AG04449 (cell line): ENCODE measurements at regions of chr15 and their contacts with region 1.

Region 1: DNA sequence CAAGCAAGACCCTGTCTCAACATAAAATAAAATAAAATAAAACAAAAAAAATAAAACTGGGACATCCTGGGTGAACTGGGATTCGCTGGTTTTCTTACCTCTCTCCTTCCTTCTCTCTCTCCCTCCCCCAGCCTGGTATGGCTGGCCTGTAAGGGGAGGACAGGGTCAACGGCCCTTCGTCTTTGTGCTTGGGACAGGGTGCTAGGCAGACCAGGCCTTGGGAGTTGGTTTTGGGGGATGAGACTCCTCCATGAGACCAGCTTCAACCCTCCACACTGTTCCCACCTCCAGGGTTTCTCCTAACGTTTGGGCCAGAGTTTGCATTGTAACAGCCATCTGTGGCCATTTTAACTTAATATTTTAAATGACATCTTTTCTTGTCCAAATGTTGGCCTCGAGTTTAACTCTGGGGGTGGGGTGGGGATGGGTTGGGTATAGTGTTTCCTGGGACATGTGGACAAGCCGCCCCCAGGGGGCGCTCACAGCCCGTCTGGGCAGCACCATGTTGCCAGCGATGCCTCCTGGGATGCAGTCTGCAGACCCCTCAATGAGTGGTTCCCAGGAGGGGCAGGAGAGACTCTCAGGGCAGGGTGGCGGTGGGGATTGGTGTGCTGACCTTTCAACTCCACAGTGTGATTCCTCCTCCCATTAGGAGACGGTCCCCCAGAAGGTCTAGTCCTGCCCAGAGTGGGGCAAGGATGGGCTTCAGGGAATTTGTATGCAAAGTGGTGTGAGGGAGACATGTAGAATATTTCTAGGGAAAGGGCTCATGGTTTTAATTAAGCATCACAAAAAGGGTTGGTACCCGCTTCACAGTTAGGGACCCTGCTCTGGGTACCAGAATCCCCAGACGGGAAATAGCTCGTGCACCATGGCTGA is 37.7 kb upstream of the LCTL start:
- DNase-seq: no peak
- H3K4me3 ChIP-seq: no peak overlapping the region
- CTCF ChIP-seq: peak; percentile 80

Region 2: GRCh38 chr15:66868918-66869317 is 265.4 kb after region 1 on chr15:
- CTCF ChIA-PET with region 1: interaction called, 36 read pairs
- POLR2A ChIA-PET with region 1: no interaction called
- DNase-seq: no peak
- H3K4me3 ChIP-seq: no peak overlapping the region
- CTCF ChIP-seq: no peak